Heart right ventricle (tissue), 16 donors: ENCODE measurements at regions of chr17 and their contacts with region 1.

Region 1: GRCh38 chr17:42459256-42459800 is 650 bp downstream of the ATP6V0A1 start:
- DNase-seq: peak; percentile 36 to 41
- ATAC-seq: peak; percentile 29 to 65 (median 46)
- H3K4me3 ChIP-seq: peak overlapping the region; percentile 39 to 87 (median 78)
- H3K27ac ChIP-seq: peak overlapping the region; percentile 73 to 96 (median 92)
- H3K4me1 ChIP-seq: peaks cover 2 to 69% (median 34%) of the 10 kb centered on the region in 9 donors
- H3K27me3 ChIP-seq: no peaks in the 10 kb centered on the region
- CTCF ChIP-seq: peak in 5 of 9 donors; percentile 7 to 49 (median 43)

Region 2: DNA sequence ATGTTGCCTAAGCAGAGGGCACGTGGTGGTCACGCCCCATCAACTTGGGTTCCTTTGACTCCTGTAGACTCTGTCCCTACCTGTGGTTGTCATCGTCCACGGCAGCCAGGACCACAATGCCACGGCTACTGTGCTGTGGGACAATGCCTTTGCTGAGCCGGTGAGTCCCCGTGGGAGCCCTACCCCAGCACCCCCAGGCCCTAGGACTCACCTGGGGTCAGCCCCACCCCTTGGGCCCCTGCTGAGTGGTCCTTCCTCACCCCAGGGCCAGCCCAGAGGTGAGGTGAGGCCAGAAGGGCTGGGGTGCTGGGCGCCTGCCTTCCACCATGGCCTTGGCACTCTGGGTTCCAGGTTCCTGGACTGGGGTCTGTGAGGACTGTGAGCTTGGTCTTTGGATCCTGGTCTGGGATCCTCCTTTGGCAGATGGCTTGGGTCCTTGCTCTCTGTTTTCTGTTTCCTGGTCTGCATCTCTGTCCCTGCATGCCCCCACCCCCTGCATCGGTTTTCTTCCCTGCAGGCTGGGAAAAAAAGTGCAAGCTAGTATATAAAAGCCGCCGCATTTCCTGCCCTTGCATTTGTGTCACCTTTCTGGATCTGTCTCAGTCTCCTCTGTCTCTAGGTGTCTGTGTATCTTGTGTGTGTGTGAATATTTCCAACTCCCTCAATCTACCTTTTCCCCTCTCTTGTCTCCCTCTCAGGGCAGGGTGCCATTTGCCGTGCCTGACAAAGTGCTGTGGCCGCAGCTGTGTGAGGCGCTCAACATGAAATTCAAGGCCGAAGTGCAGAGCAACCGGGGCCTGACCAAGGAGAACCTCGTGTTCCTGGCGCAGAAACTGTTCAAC is 153.6 kb before region 1 on chr17:
- intact Hi-C with region 1: no loop called
- DNase-seq: no peak
- ATAC-seq: no peak
- H3K4me3 ChIP-seq: no peak overlapping the region
- H3K27ac ChIP-seq: no peak overlapping the region
- H3K4me1 ChIP-seq: peaks cover 0 to 13% (median 2%) of the 10 kb centered on the region in 9 donors
- H3K27me3 ChIP-seq: no peaks in the 10 kb centered on the region
- CTCF ChIP-seq: no peak

Region 3: GRCh38 chr17:42422958-42423712 is 36.2 kb before region 1 on chr17 and contains the start of gene CAVIN1:
- intact Hi-C with region 1: loop called in 7 of 10 experiments (anchors 5 kb)
- DNase-seq: peak; percentile 100
- ATAC-seq: peak; percentile 91 to 96 (median 92)
- H3K4me3 ChIP-seq: peak within 1 kb of the TSS; percentile 79 to 100 (median 96)
- H3K27ac ChIP-seq: peak within 1 kb of the TSS; percentile 95 to 100 (median 99)
- H3K4me1 ChIP-seq: peaks cover 6 to 64% (median 39%) of the 10 kb centered on the region in 9 donors
- H3K27me3 ChIP-seq: peaks cover 0 to 54% (median 0%) of the 10 kb centered on the region in 7 donors
- CTCF ChIP-seq: peak in 2 of 9 donors; percentile 19 to 21
- total RNA-seq, gene CAVIN1: 176 to 300 (median 241) TPM

Region 4: DNA sequence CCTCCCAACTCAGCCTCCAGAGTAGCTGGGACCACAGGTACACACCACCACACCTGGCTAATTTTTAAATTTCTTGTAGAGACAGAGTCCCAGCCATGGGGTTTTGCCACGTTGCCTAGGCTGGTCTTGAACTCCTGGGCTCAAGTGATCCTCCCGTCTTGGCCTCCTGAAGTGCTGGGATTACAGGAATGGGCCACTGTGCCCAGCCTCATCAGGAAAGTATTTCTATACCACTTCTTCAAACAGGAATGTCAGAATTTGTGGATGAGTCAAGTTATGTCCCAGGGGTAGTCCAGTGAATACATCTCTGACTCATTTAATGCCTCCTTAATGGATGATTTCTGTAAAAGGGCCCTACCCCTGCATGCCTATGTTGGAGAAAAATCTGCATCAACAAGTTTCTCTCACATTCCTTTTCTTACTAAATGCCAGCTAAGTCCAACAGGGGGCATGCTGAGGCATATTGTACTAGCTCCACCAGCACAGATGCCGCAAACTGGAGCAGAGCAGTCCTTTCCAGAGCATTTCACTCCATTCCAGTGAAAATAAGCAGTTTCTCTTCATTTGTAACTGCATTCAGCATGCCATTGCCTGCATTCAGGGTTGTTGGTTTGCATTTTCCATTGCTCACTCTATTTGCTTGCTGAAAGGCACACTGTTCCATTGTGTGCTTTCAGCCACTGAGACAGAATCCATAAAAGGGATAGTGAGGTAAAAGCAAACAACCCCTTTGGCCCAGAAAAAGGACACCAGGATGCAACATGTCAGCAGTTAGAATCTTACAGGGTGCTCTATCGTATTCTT is 31.0 kb before region 1 on chr17:
- intact Hi-C with region 1: loop called in 7 of 10 experiments (anchors 5 kb)
- DNase-seq: peak in 1 of 2 donors; percentile 54
- ATAC-seq: peak in 6 of 8 donors; percentile 27 to 66 (median 50)
- H3K4me3 ChIP-seq: no peak overlapping the region
- H3K27ac ChIP-seq: peak overlapping the region in 1 of 10 donors; percentile 21
- H3K4me1 ChIP-seq: peaks cover 0 to 57% (median 32%) of the 10 kb centered on the region in 9 donors
- H3K27me3 ChIP-seq: peaks cover 0 to 19% (median 0%) of the 10 kb centered on the region in 7 donors
- CTCF ChIP-seq: peak; percentile 32 to 71 (median 63)